ENCODE measurements at regions of chr9 and their contacts with region 1.

Region 1: GRCh38 chr9:125746017-125746773 is 978 bp upstream of the PBX3 start:
- DNase-seq: peak; percentile 94
- ATAC-seq: peak; percentile 82
- H3K4me3 Mint-ChIP-seq: peak overlapping the region; percentile 92
- H3K27ac Mint-ChIP-seq: peak overlapping the region; percentile 92
- H3K4me1 Mint-ChIP-seq: peaks cover 34% of the 10 kb centered on the region
- H3K27me3 Mint-ChIP-seq: peaks cover 2% of the 10 kb centered on the region
- CTCF ChIP-seq: no peak

Region 2: GRCh38 chr9:125241000-125241862 is 505.0 kb before region 1 on chr9 and contains the start of gene HSPA5:
- CTCF ChIA-PET with region 1: no interaction called
- POLR2A ChIA-PET with region 1: no interaction called
- intact Hi-C with region 1: loop called (anchors 1 kb)
- DNase-seq: peak; percentile 94
- ATAC-seq: peak; percentile 88
- H3K4me3 Mint-ChIP-seq: peak within 1 kb of the TSS; percentile 94
- H3K27ac Mint-ChIP-seq: peak within 1 kb of the TSS; percentile 98
- H3K4me1 Mint-ChIP-seq: peaks cover 54% of the 10 kb centered on the region
- H3K27me3 Mint-ChIP-seq: no peaks in the 10 kb centered on the region
- CTCF ChIP-seq: no peak
- total RNA-seq, gene HSPA5: 118 and 119 TPM in 2 replicates

Region 3: DNA sequence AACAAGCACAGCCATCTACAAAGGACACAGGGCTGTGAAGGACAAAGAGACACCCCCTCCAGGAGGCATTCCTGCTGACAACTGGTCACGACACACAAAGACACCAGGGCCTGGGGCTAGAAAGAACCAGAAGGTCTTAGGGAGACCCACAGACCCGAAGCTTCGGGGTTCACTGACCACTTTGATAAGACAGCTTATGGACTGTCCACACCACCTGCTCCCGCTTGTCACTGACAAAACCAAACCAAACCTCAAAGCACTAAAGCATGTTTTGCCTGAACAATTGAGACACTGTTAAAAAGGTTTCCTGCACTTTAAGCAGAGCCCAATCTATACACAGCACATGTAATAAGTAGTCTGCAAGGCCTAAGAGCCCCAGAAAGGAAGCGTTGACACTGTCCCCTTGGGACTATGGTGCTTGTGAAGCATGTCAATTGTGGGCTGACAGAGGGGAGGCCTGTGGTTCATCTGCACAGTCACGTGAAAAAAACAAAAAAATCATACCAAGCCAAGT is 299.6 kb before region 1 on chr9:
- CTCF ChIA-PET with region 1: no interaction called
- POLR2A ChIA-PET with region 1: no interaction called
- intact Hi-C with region 1: loop called (anchors 5 kb)
- DNase-seq: peak; percentile 52
- ATAC-seq: peak; percentile 100
- H3K4me3 Mint-ChIP-seq: peak overlapping the region; percentile 68
- H3K27ac Mint-ChIP-seq: peak overlapping the region; percentile 74
- H3K4me1 Mint-ChIP-seq: peaks cover 44% of the 10 kb centered on the region
- H3K27me3 Mint-ChIP-seq: no peaks in the 10 kb centered on the region
- CTCF ChIP-seq: no peak

Region 4: GRCh38 chr9:125631391-125632085 is 114.7 kb before region 1 on chr9:
- CTCF ChIA-PET with region 1: no interaction called
- POLR2A ChIA-PET with region 1: interaction called, 3 read pairs
- intact Hi-C with region 1: loop called (anchors 1 kb)
- DNase-seq: no peak
- ATAC-seq: no peak
- H3K4me3 Mint-ChIP-seq: peak overlapping the region; percentile 59
- H3K27ac Mint-ChIP-seq: peak overlapping the region; percentile 90
- H3K4me1 Mint-ChIP-seq: peaks cover 84% of the 10 kb centered on the region
- H3K27me3 Mint-ChIP-seq: no peaks in the 10 kb centered on the region
- CTCF ChIP-seq: no peak

Region 5: DNA sequence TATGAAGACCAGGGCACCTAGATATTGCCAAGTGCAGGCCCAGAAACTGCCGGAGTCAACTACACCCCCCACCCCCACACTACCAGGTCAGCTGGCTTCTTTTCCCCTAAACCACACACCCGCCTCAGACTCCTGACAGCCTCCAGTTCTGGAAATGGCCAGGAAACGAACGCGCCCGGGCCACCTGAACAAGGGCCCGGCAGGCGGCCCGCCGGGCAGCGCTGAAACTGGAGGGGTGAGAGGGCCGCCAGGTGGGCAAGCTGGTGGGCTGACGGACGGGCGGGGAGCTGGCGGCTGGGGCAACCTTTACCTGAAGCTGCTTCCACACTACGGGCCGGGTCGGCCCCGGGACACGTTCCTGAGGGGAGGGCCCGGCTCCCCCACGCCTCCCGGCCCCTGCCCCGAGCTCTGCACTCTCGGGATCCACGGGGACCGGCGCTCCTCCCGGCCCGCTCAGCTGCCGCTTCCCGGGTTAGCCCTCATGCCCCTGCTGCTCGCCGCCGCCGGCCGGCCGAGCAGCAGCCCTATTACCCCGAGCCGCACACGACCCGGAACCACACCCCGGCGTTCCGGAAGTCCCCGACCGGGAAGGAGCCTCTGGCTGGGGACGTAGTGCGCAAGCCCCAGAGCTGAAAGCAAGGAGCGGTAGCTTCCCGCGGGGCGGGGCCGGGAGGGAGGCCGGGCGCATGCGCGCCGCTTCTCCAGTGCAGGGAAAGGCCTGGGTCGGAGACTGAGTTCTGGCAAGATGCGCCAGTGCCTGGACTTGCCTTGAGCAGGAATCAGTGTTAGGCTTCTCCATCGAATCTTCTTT is 39.3 kb before region 1 on chr9 and contains the start of gene MAPKAP1:
- CTCF ChIA-PET with region 1: interaction called, 3 read pairs
- POLR2A ChIA-PET with region 1: interaction called, 28 read pairs
- intact Hi-C with region 1: loop called (anchors 2 kb)
- DNase-seq: peak; percentile 86
- ATAC-seq: peak; percentile 99
- H3K4me3 Mint-ChIP-seq: peak within 1 kb of the TSS; percentile 85
- H3K27ac Mint-ChIP-seq: peak within 1 kb of the TSS; percentile 85
- H3K4me1 Mint-ChIP-seq: peaks cover 44% of the 10 kb centered on the region
- H3K27me3 Mint-ChIP-seq: peaks cover 4% of the 10 kb centered on the region
- CTCF ChIP-seq: no peak
- total RNA-seq, gene MAPKAP1: 80.2 and 84.9 TPM in 2 replicates

Region 6: GRCh38 chr9:125829743-125830142 is 83.5 kb after region 1 on chr9:
- CTCF ChIA-PET with region 1: no interaction called
- POLR2A ChIA-PET with region 1: interaction called, 10 read pairs
- intact Hi-C with region 1: loop called (anchors 2 kb)
- DNase-seq: peak; percentile 20
- ATAC-seq: peak; percentile 95
- H3K4me3 Mint-ChIP-seq: peak overlapping the region; percentile 85
- H3K27ac Mint-ChIP-seq: peak overlapping the region; percentile 88
- H3K4me1 Mint-ChIP-seq: peaks cover 30% of the 10 kb centered on the region
- H3K27me3 Mint-ChIP-seq: no peaks in the 10 kb centered on the region
- CTCF ChIP-seq: no peak